Stomach (tissue), 19 donors: ENCODE measurements at regions of chr1 and their contacts with region 1.

Region 1: GRCh38 chr1:26145041-26145959 is 13.6 kb upstream of the FAM110D start:
- DNase-seq: peak; percentile 86 to 93
- H3K4me3 ChIP-seq: no peak overlapping the region
- H3K27ac ChIP-seq: no peak overlapping the region
- H3K4me1 ChIP-seq: peaks cover 0 to 7% (median 3%) of the 10 kb centered on the region in 4 donors
- H3K27me3 ChIP-seq: peaks cover 0 to 17% (median 2%) of the 10 kb centered on the region in 3 donors
- CTCF ChIP-seq: peak in 5 of 7 experiments; percentile 61 to 86 (median 76)
- EP300 ChIP-seq: no peak
- POLR2A ChIP-seq: no peak

Region 2: GRCh38 chr1:26035959-26036755 is 109.1 kb before region 1 on chr1:
- intact Hi-C with region 1: loop called (anchors 10 kb)
- DNase-seq: peak; percentile 85 to 94
- H3K4me3 ChIP-seq: peak overlapping the region; percentile 62 to 93 (median 87)
- H3K27ac ChIP-seq: peak overlapping the region; percentile 78 to 92 (median 86)
- H3K4me1 ChIP-seq: peaks cover 16 to 21% (median 20%) of the 10 kb centered on the region in 4 donors
- H3K27me3 ChIP-seq: peaks cover 0 to 19% (median 5%) of the 10 kb centered on the region in 3 donors
- CTCF ChIP-seq: peak in 6 of 7 experiments; percentile 99 to 100 (median 100)
- EP300 ChIP-seq: no peak
- POLR2A ChIP-seq: no peak

Region 3: DNA sequence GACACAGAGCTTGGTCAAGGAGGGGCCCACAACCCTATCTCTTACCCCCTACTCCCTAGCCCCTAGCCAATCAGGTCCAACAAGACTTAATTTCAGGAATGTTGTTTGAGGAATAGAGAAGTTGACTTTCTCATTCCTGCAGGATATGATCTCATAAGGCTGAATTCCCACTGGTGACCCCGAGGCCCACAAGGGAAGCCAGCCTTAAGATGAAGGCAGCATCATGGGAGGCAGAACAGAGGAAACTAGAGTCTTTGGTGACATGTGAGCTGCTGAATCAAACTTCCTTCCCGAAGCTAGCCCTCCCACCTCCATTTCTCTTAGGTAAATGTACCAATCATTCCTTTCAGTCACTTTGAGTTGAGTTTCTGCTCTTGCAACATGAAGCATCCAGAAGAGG is 42.8 kb before region 1 on chr1:
- intact Hi-C with region 1: loop called (anchors 5 kb)
- DNase-seq: no peak
- H3K4me3 ChIP-seq: no peak overlapping the region
- H3K27ac ChIP-seq: no peak overlapping the region
- H3K4me1 ChIP-seq: peaks cover 0 to 9% (median 6%) of the 10 kb centered on the region in 4 donors
- H3K27me3 ChIP-seq: no peaks in the 10 kb centered on the region
- CTCF ChIP-seq: no peak
- EP300 ChIP-seq: no peak
- POLR2A ChIP-seq: no peak

Region 4: DNA sequence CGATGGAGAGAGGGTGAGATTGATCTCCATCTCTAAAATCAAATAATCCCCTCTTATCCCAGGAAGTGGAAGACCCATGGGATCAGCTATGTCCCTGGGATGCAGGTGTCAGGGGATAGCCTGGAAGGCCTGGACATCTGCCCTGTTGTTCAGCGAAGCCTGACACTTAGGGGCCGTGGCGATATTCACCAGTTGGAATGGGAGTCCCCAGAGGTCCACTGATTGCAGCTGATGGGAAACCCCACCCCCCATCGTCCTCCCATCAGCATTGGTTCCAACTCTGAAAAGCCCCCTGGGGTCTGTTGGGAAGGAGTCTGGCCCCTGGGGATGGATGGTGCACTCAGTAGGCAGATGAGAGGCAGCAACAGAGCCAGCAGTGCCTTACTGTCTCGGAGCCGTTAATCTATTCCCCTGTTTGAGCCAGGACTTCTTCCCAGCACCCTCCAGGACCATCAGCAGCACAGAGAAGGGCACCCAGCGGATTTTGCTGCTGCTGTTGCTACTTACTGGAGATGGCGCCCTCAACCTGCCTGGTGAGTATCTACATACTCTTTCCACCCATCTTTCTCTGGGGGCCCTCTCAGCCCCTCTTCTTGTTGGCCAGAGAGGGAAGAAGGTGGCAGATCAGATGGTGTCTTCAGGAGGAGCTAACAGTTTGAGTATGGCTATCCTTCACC is 58.5 kb after region 1 on chr1:
- intact Hi-C with region 1: no loop called
- DNase-seq: no peak
- H3K4me3 ChIP-seq: no peak overlapping the region
- H3K27ac ChIP-seq: no peak overlapping the region
- H3K4me1 ChIP-seq: peaks cover 0 to 7% (median 3%) of the 10 kb centered on the region in 4 donors
- H3K27me3 ChIP-seq: peaks cover 0 to 15% (median 2%) of the 10 kb centered on the region in 3 donors
- CTCF ChIP-seq: no peak
- EP300 ChIP-seq: no peak
- POLR2A ChIP-seq: no peak